WTC11 (cell line): ENCODE measurements at regions of chr14 and their contacts with region 1.

Region 1: GRCh38 chr14:35438910-35439713 is 34.6 kb upstream of the NFKBIA start:
- DNase-seq: no peak
- ATAC-seq: peak; percentile 91
- H3K4me3 Mint-ChIP-seq: no peak overlapping the region
- H3K27ac Mint-ChIP-seq: no peak overlapping the region
- H3K4me1 Mint-ChIP-seq: no peaks in the 10 kb centered on the region
- H3K27me3 Mint-ChIP-seq: no peaks in the 10 kb centered on the region
- CTCF ChIP-seq: peak; percentile 52; the same call in 1 of the 2 replicates

Region 2: GRCh38 chr14:35425850-35426249 is 13.3 kb before region 1 on chr14:
- CTCF ChIA-PET with region 1: interaction called, 10 read pairs
- POLR2A ChIA-PET with region 1: interaction called, 3 read pairs
- DNase-seq: no peak
- ATAC-seq: no peak
- H3K4me3 Mint-ChIP-seq: no peak overlapping the region
- H3K27ac Mint-ChIP-seq: no peak overlapping the region
- H3K4me1 Mint-ChIP-seq: no peaks in the 10 kb centered on the region; the same call in 1 of the 2 replicates
- H3K27me3 Mint-ChIP-seq: no peaks in the 10 kb centered on the region
- CTCF ChIP-seq: no peak

Region 3: DNA sequence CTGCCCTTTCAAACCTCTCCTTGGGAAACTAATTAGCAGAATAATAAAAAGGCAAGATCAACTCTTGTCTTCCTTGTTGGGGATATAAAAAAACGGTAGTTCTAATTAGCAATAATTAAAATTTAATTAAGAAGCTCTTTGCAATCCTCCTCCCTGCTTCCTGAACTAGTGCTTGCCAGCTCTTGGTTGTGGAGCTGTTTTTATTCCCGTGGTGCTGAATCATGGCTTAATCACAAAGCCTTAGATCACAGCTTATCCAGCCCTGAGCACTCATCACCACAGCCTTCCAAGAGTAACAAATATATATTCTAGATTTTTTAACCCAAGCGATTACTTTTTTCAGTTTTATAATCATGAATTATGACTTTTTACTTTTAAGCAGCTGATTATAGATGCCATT is 31.6 kb after region 1 on chr14:
- CTCF ChIA-PET with region 1: interaction called, 11 read pairs
- POLR2A ChIA-PET with region 1: no interaction called
- DNase-seq: peak; percentile 15
- ATAC-seq: peak; percentile 86
- H3K4me3 Mint-ChIP-seq: no peak overlapping the region
- H3K27ac Mint-ChIP-seq: no peak overlapping the region
- H3K4me1 Mint-ChIP-seq: peaks cover 14% of the 10 kb centered on the region
- H3K27me3 Mint-ChIP-seq: no peaks in the 10 kb centered on the region
- CTCF ChIP-seq: no peak

Region 4: GRCh38 chr14:35533357-35534207 is 94.5 kb after region 1 on chr14 and contains the start of gene INSM2:
- CTCF ChIA-PET with region 1: interaction called, 15 read pairs
- POLR2A ChIA-PET with region 1: no interaction called
- DNase-seq: peak; percentile 98
- ATAC-seq: peak; percentile 86
- H3K4me3 Mint-ChIP-seq: peak within 1 kb of the TSS; percentile 70
- H3K27ac Mint-ChIP-seq: no peak within 1 kb of the TSS
- H3K4me1 Mint-ChIP-seq: peaks cover 11% of the 10 kb centered on the region
- H3K27me3 Mint-ChIP-seq: peaks cover 92% of the 10 kb centered on the region
- CTCF ChIP-seq: no peak
- total RNA-seq, gene INSM2: 0.07 TPM in 1 of 3 replicates, not detected in the others

Region 5: DNA sequence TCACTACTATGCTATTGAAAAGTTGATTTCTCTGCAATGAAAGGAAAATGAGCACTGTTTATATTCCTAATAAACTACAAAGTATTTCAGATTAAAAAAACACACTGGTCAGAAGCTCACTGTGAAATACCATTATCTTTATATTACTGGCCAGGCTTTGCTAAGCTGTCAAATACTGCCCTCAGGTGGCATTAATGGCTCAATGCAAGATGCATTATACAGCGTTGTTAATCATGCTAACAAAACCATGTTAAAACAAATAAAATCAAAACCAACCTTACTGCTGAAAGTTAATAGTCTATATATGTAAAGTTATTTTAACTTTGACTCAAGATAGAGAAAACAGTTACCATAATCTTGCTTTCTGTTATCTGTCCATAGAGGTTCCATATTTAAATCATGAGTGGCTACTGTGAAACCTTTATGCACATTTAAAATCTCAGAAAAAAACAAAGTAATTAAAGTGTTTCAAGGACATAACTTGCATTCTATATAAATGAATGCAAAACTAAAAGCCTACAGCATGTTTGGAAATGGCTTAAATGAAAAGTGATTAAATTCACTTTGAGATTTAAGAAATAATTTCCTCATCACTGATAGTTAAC is 248.3 kb after region 1 on chr14:
- CTCF ChIA-PET with region 1: interaction called, 25 read pairs
- POLR2A ChIA-PET with region 1: no interaction called
- DNase-seq: peak; percentile 26
- ATAC-seq: peak; percentile 79
- H3K4me3 Mint-ChIP-seq: no peak overlapping the region
- H3K27ac Mint-ChIP-seq: no peak overlapping the region
- H3K4me1 Mint-ChIP-seq: no peaks in the 10 kb centered on the region
- H3K27me3 Mint-ChIP-seq: no peaks in the 10 kb centered on the region
- CTCF ChIP-seq: peak; percentile 49

Region 6: GRCh38 chr14:35814371-35815005 is 375.4 kb after region 1 on chr14:
- CTCF ChIA-PET with region 1: interaction called, 12 read pairs
- POLR2A ChIA-PET with region 1: no interaction called
- DNase-seq: peak; percentile 82
- ATAC-seq: peak; percentile 92
- H3K4me3 Mint-ChIP-seq: no peak overlapping the region
- H3K27ac Mint-ChIP-seq: no peak overlapping the region
- H3K4me1 Mint-ChIP-seq: no peaks in the 10 kb centered on the region
- H3K27me3 Mint-ChIP-seq: peaks cover 5% of the 10 kb centered on the region
- CTCF ChIP-seq: peak; percentile 71